PC-9 (cell line): ENCODE measurements at regions of chr7 and their contacts with region 1.

Region 1: GRCh38 chr7:51045319-51046102 is 262.8 kb upstream of the GRB10 start:
- DNase-seq: peak; percentile 90 to 100
- H3K4me3 ChIP-seq: no peak overlapping the region
- H3K27ac ChIP-seq: peak overlapping the region; percentile 59
- H3K4me1 ChIP-seq: peaks cover 28% of the 10 kb centered on the region
- H3K27me3 ChIP-seq: no peaks in the 10 kb centered on the region
- CTCF ChIP-seq: no peak

Region 2: GRCh38 chr7:50449881-50450589 is 595.5 kb before region 1 on chr7 and contains the start of gene FIGNL1:
- CTCF ChIA-PET with region 1: no interaction called
- POLR2A ChIA-PET with region 1: no interaction called
- intact Hi-C with region 1: loop called (anchors 10 kb)
- DNase-seq: peak; percentile 74 to 81
- H3K4me3 ChIP-seq: peak within 1 kb of the TSS; percentile 75
- H3K27ac ChIP-seq: peak within 1 kb of the TSS; percentile 94
- H3K4me1 ChIP-seq: peaks cover 41% of the 10 kb centered on the region
- H3K27me3 ChIP-seq: peaks cover under 1% of the 10 kb centered on the region; the same call in 1 of the 2 replicates
- CTCF ChIP-seq: no peak
- total RNA-seq, gene FIGNL1: 18.7 and 25.7 TPM in 2 replicates

Region 3: DNA sequence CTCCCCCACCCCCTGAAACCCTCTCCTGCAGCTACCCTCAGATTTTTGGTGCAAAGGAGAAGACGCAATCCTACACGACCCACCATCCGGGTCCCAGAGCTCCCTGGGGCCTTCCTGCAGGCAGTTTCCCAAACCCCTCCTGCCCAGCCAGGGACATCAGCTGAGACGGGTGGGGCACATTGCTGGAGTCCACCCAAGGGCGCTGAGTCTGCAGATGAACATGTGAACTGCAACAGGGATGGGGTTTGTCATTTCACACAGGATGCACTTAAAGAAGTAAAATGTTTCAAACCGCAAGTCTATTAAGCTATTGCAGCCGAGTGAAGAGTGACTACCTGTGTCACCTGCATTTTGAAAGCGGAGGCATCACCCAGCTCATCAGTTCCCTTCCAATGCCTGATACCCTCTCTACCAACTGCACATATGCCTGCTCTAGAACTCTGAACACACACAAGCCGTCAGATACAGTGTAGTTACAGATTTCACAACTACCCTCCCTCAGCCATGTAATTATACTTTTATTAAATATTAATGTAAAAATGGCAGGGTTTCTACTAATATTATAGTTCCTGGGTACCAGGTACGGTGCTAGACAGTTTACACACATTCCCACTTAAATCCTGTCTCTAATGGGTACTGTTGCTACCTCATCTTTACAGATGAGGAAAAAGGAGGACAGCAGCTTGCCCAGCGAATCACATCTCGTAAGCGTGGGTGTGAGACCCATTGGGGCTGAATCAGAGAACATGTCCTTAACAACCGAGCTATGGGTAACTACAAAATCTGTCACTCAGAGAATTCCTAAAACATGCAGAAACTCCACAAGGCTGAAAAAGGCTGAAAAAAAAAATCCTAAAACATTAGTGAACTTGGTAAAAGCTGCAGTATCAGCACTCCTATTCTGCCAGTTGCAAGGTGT is 334.0 kb before region 1 on chr7:
- CTCF ChIA-PET with region 1: no interaction called
- POLR2A ChIA-PET with region 1: no interaction called
- intact Hi-C with region 1: loop called (anchors 5 kb)
- DNase-seq: peak in 1 of 2 experiments; percentile 22
- H3K4me3 ChIP-seq: no peak overlapping the region
- H3K27ac ChIP-seq: no peak overlapping the region
- H3K4me1 ChIP-seq: peaks cover 72% of the 10 kb centered on the region
- H3K27me3 ChIP-seq: no peaks in the 10 kb centered on the region
- CTCF ChIP-seq: no peak

Region 4: GRCh38 chr7:50832744-50833143 is 212.8 kb before region 1 on chr7:
- CTCF ChIA-PET with region 1: no interaction called
- POLR2A ChIA-PET with region 1: no interaction called
- intact Hi-C with region 1: loop called (anchors 1 kb)
- DNase-seq: peak; percentile 61 to 98
- H3K4me3 ChIP-seq: no peak overlapping the region
- H3K27ac ChIP-seq: peak overlapping the region; percentile 49
- H3K4me1 ChIP-seq: peaks cover 49% of the 10 kb centered on the region
- H3K27me3 ChIP-seq: no peaks in the 10 kb centered on the region
- CTCF ChIP-seq: no peak

Region 5: DNA sequence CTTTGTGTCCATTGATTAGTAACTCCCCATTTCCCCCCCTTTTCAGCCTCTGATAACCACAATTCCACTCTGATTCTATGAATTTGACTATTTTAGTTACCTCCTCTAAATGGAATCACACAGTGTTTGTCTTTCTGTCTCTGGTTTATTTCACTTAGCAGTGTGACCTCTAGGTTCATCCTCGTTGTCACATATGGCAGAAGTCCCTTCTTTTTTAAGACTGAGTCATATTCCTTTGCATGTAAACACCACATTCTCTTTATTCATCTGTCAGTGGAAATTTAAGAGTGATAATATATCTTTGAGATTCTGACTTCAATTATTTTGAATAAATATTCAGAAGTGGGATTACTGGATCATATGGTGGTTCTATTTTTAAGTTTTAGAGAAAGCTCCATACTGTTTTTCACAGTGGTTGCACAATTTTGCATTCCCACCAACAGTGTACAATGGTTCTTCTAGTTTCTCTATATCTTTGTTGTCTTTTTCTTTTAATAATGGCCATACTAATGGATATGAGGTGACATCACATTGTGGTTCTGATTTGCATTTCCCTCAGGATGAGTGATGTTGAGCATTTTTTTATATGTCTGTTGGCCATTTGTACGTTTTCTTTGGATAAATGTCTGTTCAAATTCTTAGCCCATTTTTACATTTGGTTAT is 136.8 kb before region 1 on chr7:
- CTCF ChIA-PET with region 1: no interaction called
- POLR2A ChIA-PET with region 1: no interaction called
- intact Hi-C with region 1: no loop called
- DNase-seq: no peak
- H3K4me3 ChIP-seq: no peak overlapping the region
- H3K27ac ChIP-seq: no peak overlapping the region
- H3K4me1 ChIP-seq: 0 out of 2 replicates have a peak, but pooled peaks cover under 1% of the 10 kb centered on the region
- H3K27me3 ChIP-seq: no peaks in the 10 kb centered on the region; the same call in 1 of the 2 replicates
- CTCF ChIP-seq: no peak

Region 6: DNA sequence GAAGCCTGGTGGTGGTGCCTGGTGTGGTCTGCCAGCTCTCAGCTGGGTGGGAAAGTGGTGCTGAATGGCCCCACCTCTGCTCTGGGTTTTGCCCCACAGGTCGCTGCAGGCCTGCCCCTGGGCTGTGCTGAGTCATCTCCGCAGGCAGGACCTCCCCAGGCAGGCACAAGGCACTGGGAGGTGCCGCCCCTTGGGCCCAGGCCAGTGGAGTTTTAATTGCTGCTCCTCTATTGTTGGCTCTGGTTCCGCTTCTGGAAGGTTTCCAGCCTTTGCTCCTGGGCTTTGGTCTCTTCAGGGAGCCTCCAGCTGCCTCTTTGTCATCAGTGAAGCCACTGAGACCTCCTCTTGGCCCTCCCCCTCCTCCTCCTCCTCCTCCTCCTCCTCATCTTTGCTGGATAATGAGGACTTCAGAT is 82.5 kb before region 1 on chr7:
- CTCF ChIA-PET with region 1: no interaction called
- POLR2A ChIA-PET with region 1: no interaction called
- intact Hi-C with region 1: loop called (anchors 1 kb)
- DNase-seq: peak; percentile 95 to 99
- H3K4me3 ChIP-seq: peak overlapping the region; percentile 12; the same call in 1 of the 2 replicates
- H3K27ac ChIP-seq: peak overlapping the region; percentile 59
- H3K4me1 ChIP-seq: peaks cover 36% of the 10 kb centered on the region
- H3K27me3 ChIP-seq: no peaks in the 10 kb centered on the region
- CTCF ChIP-seq: no peak

Region 7: DNA sequence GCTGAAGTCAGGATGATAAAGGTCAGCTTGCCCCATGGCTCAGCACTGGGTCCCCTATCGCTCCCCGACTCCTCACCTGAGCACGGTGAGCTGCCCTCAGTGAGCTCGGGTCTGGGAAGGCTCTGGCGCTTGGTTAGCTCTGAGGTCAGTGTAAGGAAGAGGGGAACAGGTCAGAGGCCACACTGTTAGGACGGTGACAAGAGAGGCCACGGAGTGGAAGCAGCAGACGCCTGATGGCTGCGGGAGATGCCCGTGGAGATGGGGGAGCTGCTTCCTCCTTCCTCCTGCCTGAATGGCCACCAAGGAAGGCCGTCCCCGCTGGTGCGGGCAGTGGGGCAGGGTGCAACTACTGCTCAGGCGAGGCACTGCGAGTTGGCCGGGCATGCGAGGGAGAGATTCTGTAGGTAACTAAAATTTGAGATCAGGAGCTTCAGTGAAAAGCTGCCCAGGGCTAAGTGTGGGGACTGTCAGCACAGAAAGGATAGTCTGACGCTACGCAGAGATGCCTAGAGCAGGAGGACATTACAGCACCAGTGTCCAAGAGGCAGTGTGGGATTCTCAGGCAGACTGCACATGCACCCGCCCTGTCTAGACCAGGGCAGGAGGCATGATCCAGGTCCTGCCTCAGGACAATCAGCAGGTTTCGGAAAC is 31.5 kb before region 1 on chr7:
- CTCF ChIA-PET with region 1: no interaction called
- POLR2A ChIA-PET with region 1: interaction called, 10 read pairs
- intact Hi-C with region 1: no loop called
- DNase-seq: no peak
- H3K4me3 ChIP-seq: no peak overlapping the region
- H3K27ac ChIP-seq: no peak overlapping the region
- H3K4me1 ChIP-seq: peaks cover 13% of the 10 kb centered on the region
- H3K27me3 ChIP-seq: no peaks in the 10 kb centered on the region
- CTCF ChIP-seq: no peak